A673 (cell line): ENCODE measurements at regions of chr20 and their contacts with region 1.

Region 1: GRCh38 chr20:24389686-24390085 is 79.7 kb upstream of the SYNDIG1 start:
- DNase-seq: no peak
- H3K4me3 ChIP-seq: no peak overlapping the region
- H3K27ac ChIP-seq: no peak overlapping the region
- H3K4me1 ChIP-seq: no peaks in the 10 kb centered on the region
- H3K27me3 ChIP-seq: no peaks in the 10 kb centered on the region
- CTCF ChIP-seq: no peak

Region 2: GRCh38 chr20:24445510-24446170 is 56.0 kb after region 1 on chr20:
- CTCF ChIA-PET with region 1: no interaction called
- POLR2A ChIA-PET with region 1: no interaction called
- intact Hi-C with region 1: loop called (anchors 10 kb)
- DNase-seq: no peak
- H3K4me3 ChIP-seq: no peak overlapping the region
- H3K27ac ChIP-seq: no peak overlapping the region
- H3K4me1 ChIP-seq: no peaks in the 10 kb centered on the region
- H3K27me3 ChIP-seq: no peaks in the 10 kb centered on the region
- CTCF ChIP-seq: no peak